SK-N-SH (cell line): ENCODE measurements at regions of chr11 and their contacts with region 1.

Region 1: GRCh38 chr11:134050541-134051383 is 18.1 kb upstream of the JAM3 start:
- DNase-seq: peak; percentile 96
- H3K4me3 ChIP-seq: peak overlapping the region; percentile 26 to 44; a peak in 3 of 4 replicates
- H3K27ac ChIP-seq: no peak overlapping the region
- H3K4me1 ChIP-seq: peaks cover 0 to 18% of the 10 kb centered on the region in 2 experiments; a peak in 1 of 4 replicates
- H3K27me3 ChIP-seq: no peaks in the 10 kb centered on the region
- CTCF ChIP-seq: peak; percentile 92
- EP300 ChIP-seq: no peak
- RAD21 ChIP-seq: peak; percentile 93

Region 2: GRCh38 chr11:133842053-133842452 is 208.7 kb before region 1 on chr11:
- CTCF ChIA-PET with region 1: no interaction called
- POLR2A ChIA-PET with region 1: no interaction called
- DNase-seq: no peak
- H3K4me3 ChIP-seq: no peak overlapping the region
- H3K27ac ChIP-seq: no peak overlapping the region
- H3K4me1 ChIP-seq: no peaks in the 10 kb centered on the region; a peak in 1 of 4 replicates
- H3K27me3 ChIP-seq: no peaks in the 10 kb centered on the region
- CTCF ChIP-seq: no peak
- EP300 ChIP-seq: no peak
- RAD21 ChIP-seq: no peak

Region 3: DNA sequence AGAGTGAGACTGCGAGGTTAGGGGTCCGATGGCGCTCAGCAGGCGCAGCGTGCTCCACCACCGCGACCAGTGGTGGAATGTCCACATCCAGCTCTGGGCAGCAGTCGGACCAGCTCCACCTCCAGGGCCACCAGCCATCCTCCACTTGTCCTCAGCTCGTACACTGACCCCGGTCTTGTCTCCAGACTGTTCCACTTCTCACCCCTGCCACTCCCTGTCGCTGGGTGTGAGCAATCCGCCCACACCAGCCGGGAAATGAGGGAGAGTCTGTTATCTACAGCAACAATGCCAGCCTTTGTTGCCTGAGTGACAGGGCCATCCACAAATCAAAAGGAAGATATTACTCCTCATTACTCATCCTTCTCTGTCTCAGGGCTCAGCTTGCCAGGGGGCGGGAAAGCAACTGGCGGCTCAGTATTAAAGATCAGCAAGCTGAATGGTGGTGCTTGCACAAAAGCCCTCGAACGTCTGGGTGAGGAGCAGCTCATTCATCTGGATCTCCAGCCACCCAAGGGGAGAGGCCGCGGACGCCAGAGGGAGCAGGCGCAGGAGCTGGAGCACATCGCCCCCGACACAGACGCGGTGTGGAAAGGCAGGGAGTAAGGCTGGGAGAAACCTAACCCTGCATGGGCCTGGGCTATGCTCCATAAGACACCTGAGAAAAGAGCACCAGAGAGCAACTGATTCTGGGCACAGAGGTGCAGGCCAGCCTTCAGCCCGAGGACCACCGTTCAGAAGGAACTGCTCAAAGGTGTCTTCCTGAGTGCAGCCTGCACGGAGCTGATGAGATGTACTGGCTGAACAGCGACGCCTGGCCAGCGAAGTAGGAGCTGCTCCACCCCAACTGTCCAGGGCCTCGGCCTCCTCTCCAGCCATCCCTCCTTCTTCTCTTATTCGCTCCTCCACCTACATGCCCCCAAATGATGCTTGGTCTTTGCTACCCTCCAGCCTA is 115.9 kb before region 1 on chr11:
- CTCF ChIA-PET with region 1: interaction called, 38 read pairs
- POLR2A ChIA-PET with region 1: interaction called, 5 read pairs
- DNase-seq: peak; percentile 87
- H3K4me3 ChIP-seq: no peak overlapping the region
- H3K27ac ChIP-seq: peak overlapping the region in 1 of 2 experiments; percentile 100; a peak in 2 of 4 replicates
- H3K4me1 ChIP-seq: peaks cover 0 to 66% of the 10 kb centered on the region in 2 experiments; a peak in 1 of 4 replicates
- H3K27me3 ChIP-seq: no peaks in the 10 kb centered on the region
- CTCF ChIP-seq: no peak
- EP300 ChIP-seq: 0 out of 4 replicates have a peak, but pooled peaks of 1 of the 2 experiments have one; percentile 12
- RAD21 ChIP-seq: no peak

Region 4: GRCh38 chr11:133988686-133989410 is 61.9 kb before region 1 on chr11:
- CTCF ChIA-PET with region 1: interaction called, 11 read pairs
- POLR2A ChIA-PET with region 1: no interaction called
- DNase-seq: no peak
- H3K4me3 ChIP-seq: no peak overlapping the region
- H3K27ac ChIP-seq: no peak overlapping the region; a peak in 1 of 4 replicates
- H3K4me1 ChIP-seq: peaks cover 0 to 39% of the 10 kb centered on the region in 2 experiments; a peak in 2 of 4 replicates
- H3K27me3 ChIP-seq: no peaks in the 10 kb centered on the region; the same call in 1 of the 2 replicates
- CTCF ChIP-seq: no peak
- EP300 ChIP-seq: no peak
- RAD21 ChIP-seq: no peak

Region 5: DNA sequence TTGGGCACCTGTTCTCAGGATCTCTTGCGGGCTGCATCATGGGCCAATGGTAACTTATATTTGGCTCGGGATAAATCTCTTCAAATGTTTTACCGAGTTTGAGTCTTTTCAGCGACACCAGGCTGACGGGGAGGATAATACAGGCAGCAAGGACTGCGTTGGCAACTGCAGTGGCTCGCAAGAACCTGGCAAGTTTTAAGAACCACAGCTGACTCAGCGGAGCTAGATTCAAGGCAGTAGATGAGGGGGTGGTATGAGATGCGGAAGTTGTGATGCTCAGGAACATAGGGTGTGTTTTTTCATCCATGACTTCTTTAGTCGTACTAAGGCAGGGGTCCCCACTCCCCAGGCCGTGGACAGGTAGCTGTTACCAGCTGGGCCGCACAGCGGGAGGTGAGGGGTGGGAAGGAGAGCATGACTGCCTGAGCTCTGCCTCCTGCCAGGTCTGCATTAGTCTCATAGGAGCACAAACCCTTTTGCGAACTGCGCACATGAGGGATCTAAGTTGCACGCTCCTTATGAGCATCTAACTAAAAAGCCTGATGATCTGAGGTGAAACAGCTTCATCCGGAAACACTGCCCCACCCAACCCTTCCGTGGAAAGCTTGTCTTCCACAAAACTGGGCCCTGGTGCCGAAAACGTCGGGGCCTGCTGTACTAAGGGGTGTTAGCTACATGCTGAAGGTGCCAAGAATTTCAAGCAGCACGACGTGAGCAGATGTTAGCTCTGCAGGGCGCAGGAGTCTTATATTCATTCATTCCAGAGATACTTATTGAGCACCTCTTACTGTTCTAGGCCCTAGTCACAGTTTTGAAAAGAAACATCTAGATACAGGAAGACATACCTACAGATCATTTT is 11.7 kb after region 1 on chr11:
- CTCF ChIA-PET with region 1: interaction called, 27 read pairs
- POLR2A ChIA-PET with region 1: no interaction called
- DNase-seq: no peak
- H3K4me3 ChIP-seq: no peak overlapping the region
- H3K27ac ChIP-seq: no peak overlapping the region
- H3K4me1 ChIP-seq: no peaks in the 10 kb centered on the region
- H3K27me3 ChIP-seq: peaks cover 12% of the 10 kb centered on the region; the same call in 1 of the 2 replicates
- CTCF ChIP-seq: no peak
- EP300 ChIP-seq: no peak
- RAD21 ChIP-seq: no peak

Region 6: DNA sequence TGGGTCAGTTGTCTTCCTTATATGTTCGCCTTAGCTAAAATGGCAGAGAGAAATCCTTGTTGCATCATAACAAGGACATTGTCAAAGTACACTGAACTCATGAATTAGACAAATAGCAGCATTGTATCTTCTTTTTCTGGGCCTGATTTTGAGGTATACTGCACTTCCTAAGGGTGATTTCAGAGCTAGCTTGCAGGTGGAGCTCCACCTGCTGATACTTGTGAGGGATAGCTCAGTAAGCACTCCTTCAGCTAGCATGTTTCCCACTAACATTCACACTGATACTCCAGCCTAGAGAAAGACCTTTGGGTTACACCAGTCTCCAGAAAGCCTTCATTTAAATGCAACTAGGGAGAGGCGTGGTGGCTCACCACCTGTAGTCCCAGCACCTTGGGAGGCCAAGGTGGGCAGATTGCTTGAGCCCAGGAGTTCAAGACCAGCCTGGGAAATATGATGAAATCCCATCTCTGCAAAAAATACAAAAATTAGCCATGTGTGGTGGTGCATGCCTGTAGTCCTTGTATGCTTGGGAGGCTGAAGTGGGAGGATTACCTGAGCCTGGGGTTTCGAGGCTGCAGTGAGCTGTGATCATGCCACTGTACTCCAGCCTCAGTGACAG is 47.9 kb after region 1 on chr11:
- CTCF ChIA-PET with region 1: interaction called, 11 read pairs
- POLR2A ChIA-PET with region 1: no interaction called
- DNase-seq: no peak
- H3K4me3 ChIP-seq: no peak overlapping the region
- H3K27ac ChIP-seq: no peak overlapping the region
- H3K4me1 ChIP-seq: peaks cover 0 to 4% of the 10 kb centered on the region in 2 experiments; a peak in 1 of 4 replicates
- H3K27me3 ChIP-seq: no peaks in the 10 kb centered on the region
- CTCF ChIP-seq: no peak; the same call in 1 of the 2 replicates
- EP300 ChIP-seq: no peak
- RAD21 ChIP-seq: peak; percentile 51

Region 7: GRCh38 chr11:134153147-134153905 is 102.6 kb after region 1 on chr11:
- CTCF ChIA-PET with region 1: interaction called, 14 read pairs
- POLR2A ChIA-PET with region 1: no interaction called
- DNase-seq: no peak
- H3K4me3 ChIP-seq: no peak overlapping the region
- H3K27ac ChIP-seq: no peak overlapping the region
- H3K4me1 ChIP-seq: no peaks in the 10 kb centered on the region; a peak in 1 of 4 replicates
- H3K27me3 ChIP-seq: no peaks in the 10 kb centered on the region
- CTCF ChIP-seq: no peak
- EP300 ChIP-seq: no peak
- RAD21 ChIP-seq: no peak